Aorta (tissue), 5 donors: ENCODE measurements at regions of chr11 and their contacts with region 1.

Region 1: GRCh38 chr11:114243461-114244372 is 52.5 kb upstream of the NNMT start:
- DNase-seq: no peak
- ATAC-seq: peak; percentile 44
- H3K4me3 ChIP-seq: no peak overlapping the region
- H3K27ac ChIP-seq: no peak overlapping the region
- H3K4me1 ChIP-seq: no peaks in the 10 kb centered on the region
- H3K27me3 ChIP-seq: no peaks in the 10 kb centered on the region

Region 2: GRCh38 chr11:113540416-113541330 is 703.0 kb before region 1 on chr11:
- intact Hi-C with region 1: no loop called
- DNase-seq: no peak
- ATAC-seq: no peak
- H3K4me3 ChIP-seq: no peak overlapping the region
- H3K27ac ChIP-seq: no peak overlapping the region
- H3K4me1 ChIP-seq: no peaks in the 10 kb centered on the region
- H3K27me3 ChIP-seq: no peaks in the 10 kb centered on the region

Region 3: GRCh38 chr11:114154271-114155047 is 89.3 kb before region 1 on chr11:
- intact Hi-C with region 1: no loop called
- DNase-seq: no peak
- ATAC-seq: peak; percentile 74
- H3K4me3 ChIP-seq: no peak overlapping the region
- H3K27ac ChIP-seq: peak overlapping the region; percentile 78
- H3K4me1 ChIP-seq: peaks cover 13 to 26% of the 10 kb centered on the region in 2 donors
- H3K27me3 ChIP-seq: no peaks in the 10 kb centered on the region

Region 4: GRCh38 chr11:114164546-114164945 is 79.2 kb before region 1 on chr11:
- intact Hi-C with region 1: no loop called
- DNase-seq: peak in 1 of 2 donors; percentile 43
- ATAC-seq: no peak
- H3K4me3 ChIP-seq: no peak overlapping the region
- H3K27ac ChIP-seq: peak overlapping the region; percentile 98 to 99
- H3K4me1 ChIP-seq: peaks cover 21 to 33% of the 10 kb centered on the region in 2 donors
- H3K27me3 ChIP-seq: no peaks in the 10 kb centered on the region

Region 5: GRCh38 chr11:114208377-114208776 is 35.3 kb before region 1 on chr11:
- intact Hi-C with region 1: loop called in 1 of 2 experiments (anchors 5 kb)
- DNase-seq: no peak
- ATAC-seq: no peak
- H3K4me3 ChIP-seq: no peak overlapping the region
- H3K27ac ChIP-seq: no peak overlapping the region
- H3K4me1 ChIP-seq: peaks cover 2 to 3% of the 10 kb centered on the region in 2 donors
- H3K27me3 ChIP-seq: no peaks in the 10 kb centered on the region